ENCODE measurements at regions of chr3 and their contacts with region 1.

Region 1: GRCh38 chr3:87227104-87227834 is at the start of gene CHMP2B:
- DNase-seq: peak; percentile 92
- H3K4me3 Mint-ChIP-seq: peak within 1 kb of the TSS; percentile 83
- H3K27ac Mint-ChIP-seq: peak within 1 kb of the TSS; percentile 85
- H3K4me1 Mint-ChIP-seq: peaks cover 31% of the 10 kb centered on the region
- H3K27me3 Mint-ChIP-seq: peaks cover 14% of the 10 kb centered on the region
- total RNA-seq, gene CHMP2B: 24.9 to 26.1 TPM

Region 2: GRCh38 chr3:87088993-87089841 is 138.1 kb before region 1 on chr3:
- CTCF ChIA-PET with region 1: no interaction called
- intact Hi-C with region 1: loop called (anchors 5 kb)
- DNase-seq: peak; percentile 27
- H3K4me3 Mint-ChIP-seq: peak overlapping the region; percentile 67
- H3K27ac Mint-ChIP-seq: no peak overlapping the region
- H3K4me1 Mint-ChIP-seq: peaks cover 17% of the 10 kb centered on the region
- H3K27me3 Mint-ChIP-seq: peaks cover 15% of the 10 kb centered on the region

Region 3: DNA sequence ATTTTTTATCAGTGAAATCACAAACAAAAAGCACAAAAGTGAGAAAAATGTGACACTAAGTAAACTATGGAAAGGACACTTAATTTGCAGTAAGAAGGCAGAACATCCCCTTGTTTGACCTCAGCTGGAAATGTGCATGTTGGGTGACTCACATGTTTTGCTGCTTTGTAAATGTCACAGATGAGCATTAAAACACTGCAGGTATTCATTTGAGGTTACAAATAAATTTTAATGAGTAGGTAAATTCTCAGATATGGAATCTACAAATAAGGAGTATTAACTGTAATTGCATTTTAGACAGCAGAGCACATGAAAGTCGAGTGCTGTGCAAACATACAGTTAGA is 20.1 kb after region 1 on chr3:
- CTCF ChIA-PET with region 1: no interaction called
- intact Hi-C with region 1: loop called (anchors 2 kb)
- DNase-seq: no peak
- H3K4me3 Mint-ChIP-seq: no peak overlapping the region
- H3K27ac Mint-ChIP-seq: no peak overlapping the region
- H3K4me1 Mint-ChIP-seq: peaks cover 9% of the 10 kb centered on the region
- H3K27me3 Mint-ChIP-seq: no peaks in the 10 kb centered on the region

Region 4: DNA sequence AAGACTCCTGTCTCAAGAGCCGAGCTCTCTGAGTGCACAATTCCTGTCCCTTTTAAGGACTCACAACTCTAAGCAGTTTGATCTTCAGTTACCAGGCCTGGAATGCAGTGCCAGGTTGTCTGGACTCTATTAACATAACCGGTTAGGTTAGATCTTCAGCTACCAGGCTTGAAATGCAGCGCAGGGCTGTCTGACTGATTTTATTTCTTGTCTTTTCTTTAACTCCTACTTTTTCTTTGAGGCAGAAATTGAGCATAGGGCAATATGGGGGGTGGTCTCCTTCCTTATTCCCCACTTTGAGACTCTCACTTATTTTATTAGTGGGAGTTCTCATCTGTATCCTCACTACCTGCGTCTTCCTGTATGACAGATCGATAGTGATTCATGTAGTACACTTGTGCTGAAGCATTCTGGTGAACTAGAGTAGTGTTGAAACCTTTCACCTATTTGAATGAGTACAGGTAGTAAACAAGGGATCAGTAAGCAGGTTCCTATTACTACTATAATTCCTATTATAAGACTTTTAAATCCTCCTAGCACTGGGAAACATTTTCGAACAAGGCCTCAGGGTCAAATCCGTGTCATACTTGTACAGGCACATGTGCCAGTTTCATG is 506.6 kb after region 1 on chr3:
- CTCF ChIA-PET with region 1: no interaction called
- intact Hi-C with region 1: no loop called
- DNase-seq: no peak
- H3K4me3 Mint-ChIP-seq: no peak overlapping the region
- H3K27ac Mint-ChIP-seq: no peak overlapping the region
- H3K4me1 Mint-ChIP-seq: no peaks in the 10 kb centered on the region
- H3K27me3 Mint-ChIP-seq: no peaks in the 10 kb centered on the region

Measured in activated naive CD4-positive, alpha-beta T cell treated with anti-CD3 and anti-CD28 coated beads for 36 hours (primary cell).